GM12878 (cell line): ENCODE measurements at regions of chr16 and their contacts with region 1.

Region 1: DNA sequence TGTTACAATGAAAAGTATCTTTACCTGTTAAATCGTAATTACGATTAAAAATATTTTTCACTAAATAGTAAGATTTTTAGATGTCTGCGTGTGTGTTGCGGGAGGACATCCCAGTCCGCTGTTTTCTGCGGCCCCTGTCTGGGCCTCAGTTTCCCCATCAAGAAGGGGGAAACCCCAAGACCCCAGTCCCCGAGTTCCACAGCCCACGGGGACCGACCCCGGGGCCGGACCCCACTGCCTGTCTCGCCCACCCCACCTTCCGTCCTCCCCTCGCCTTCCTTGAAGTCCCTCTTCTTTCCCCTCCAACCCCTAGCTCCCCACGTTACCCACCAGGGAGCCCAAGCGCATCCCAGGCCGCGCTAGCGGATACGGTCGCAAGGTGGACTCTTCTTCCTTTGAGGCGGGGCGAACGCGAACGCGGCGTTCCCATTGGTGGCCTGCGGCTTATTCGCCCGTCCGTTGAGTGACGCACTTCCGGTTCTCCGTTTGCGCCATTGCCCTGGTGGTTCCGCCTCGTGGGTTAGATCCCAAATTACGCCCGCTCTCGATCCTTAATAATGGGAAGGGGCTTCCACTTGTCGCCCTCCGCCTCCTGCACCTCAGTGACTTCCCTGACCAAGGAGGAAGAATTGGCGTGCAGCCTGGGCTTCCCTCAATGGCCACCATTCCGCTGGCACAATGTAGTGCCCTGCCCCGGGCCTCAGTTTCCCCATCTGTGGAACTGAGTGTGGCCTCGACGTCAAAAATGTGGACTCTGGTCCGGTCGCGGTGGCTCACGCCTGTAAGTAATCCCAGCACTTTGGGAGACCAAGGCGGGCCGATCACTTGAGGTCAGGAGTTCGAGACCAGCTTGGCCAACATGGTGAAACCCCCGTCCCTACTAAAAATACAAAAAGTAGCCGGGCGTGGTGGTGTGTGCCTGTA is at the start of gene NSMCE1:
- DNase-seq: peak; percentile 84
- ATAC-seq: peak; percentile 95
- H3K4me3 ChIP-seq: peak within 1 kb of the TSS; percentile 81
- H3K27ac ChIP-seq: peak within 1 kb of the TSS; percentile 79
- H3K4me1 ChIP-seq: peaks cover 4% of the 10 kb centered on the region
- H3K27me3 ChIP-seq: no peaks in the 10 kb centered on the region
- CTCF ChIP-seq: peak; percentile 12 to 42 (median 13); a peak in 2 of 6 replicates
- EP300 ChIP-seq: 0 out of 4 replicates have a peak, but pooled peaks have one; percentile 21 to 25
- POLR2A ChIP-seq: peak; percentile 96
- RAD21 ChIP-seq: no peak
- polyA plus RNA-seq, gene NSMCE1: 168 to 214 TPM

Region 2: GRCh38 chr16:27248036-27248435 is 20.6 kb before region 1 on chr16:
- CTCF ChIA-PET with region 1: interaction called, 6 read pairs
- POLR2A ChIA-PET with region 1: interaction called, 15 read pairs
- RAD21 ChIA-PET with region 1: interaction called, 40 read pairs
- SMC1A ChIA-PET with region 1: interaction called, 178 read pairs
- in situ Hi-C with region 1: no loop called
- intact Hi-C with region 1: no loop called
- DNase-seq: no peak
- ATAC-seq: no peak
- H3K4me3 ChIP-seq: no peak overlapping the region
- H3K27ac ChIP-seq: no peak overlapping the region
- H3K4me1 ChIP-seq: peaks cover 11% of the 10 kb centered on the region
- H3K27me3 ChIP-seq: no peaks in the 10 kb centered on the region
- CTCF ChIP-seq: no peak
- EP300 ChIP-seq: no peak
- POLR2A ChIP-seq: no peak
- RAD21 ChIP-seq: no peak

Region 3: GRCh38 chr16:27436921-27437650 is 168.4 kb after region 1 on chr16:
- CTCF ChIA-PET with region 1: no interaction called
- POLR2A ChIA-PET with region 1: no interaction called
- RAD21 ChIA-PET with region 1: no interaction called
- SMC1A ChIA-PET with region 1: no interaction called
- in situ Hi-C with region 1: no loop called
- intact Hi-C with region 1: no loop called
- DNase-seq: no peak
- ATAC-seq: no peak
- H3K4me3 ChIP-seq: no peak overlapping the region
- H3K27ac ChIP-seq: no peak overlapping the region
- H3K4me1 ChIP-seq: peaks cover 8% of the 10 kb centered on the region
- H3K27me3 ChIP-seq: no peaks in the 10 kb centered on the region
- CTCF ChIP-seq: no peak
- EP300 ChIP-seq: no peak
- POLR2A ChIP-seq: peak; percentile 58
- RAD21 ChIP-seq: no peak